B cell (primary cell): ENCODE measurements at regions of chr3 and their contacts with region 1.

Region 1: GRCh38 chr3:184174646-184175492 is at the start of gene AP2M1:
- DNase-seq: peak; percentile 98
- ATAC-seq: peak; percentile 98
- H3K4me3 ChIP-seq: peak within 1 kb of the TSS; percentile 57 to 100 (median 98)
- H3K4me3 Mint-ChIP-seq: peak within 1 kb of the TSS; percentile 93
- H3K27ac ChIP-seq: peak within 1 kb of the TSS; percentile 56 to 80
- H3K27ac Mint-ChIP-seq: peak within 1 kb of the TSS; percentile 96
- H3K4me1 ChIP-seq: peaks cover 23 to 34% of the 10 kb centered on the region in 2 donors
- H3K4me1 Mint-ChIP-seq: peaks cover 37% of the 10 kb centered on the region
- H3K27me3 ChIP-seq: no peaks in the 10 kb centered on the region
- H3K27me3 Mint-ChIP-seq: no peaks in the 10 kb centered on the region
- CTCF ChIP-seq: no peak
- total RNA-seq, gene AP2M1: 191 and 207 TPM in 2 replicates

Region 2: GRCh38 chr3:184154885-184155643 is 19.8 kb before region 1 on chr3 and contains the start of gene DVL3:
- CTCF ChIA-PET with region 1: interaction called, 4 read pairs
- POLR2A ChIA-PET with region 1: interaction called, 4 read pairs
- intact Hi-C with region 1: loop called (anchors 1 kb)
- DNase-seq: peak; percentile 77
- ATAC-seq: peak; percentile 83
- H3K4me3 ChIP-seq: peak within 1 kb of the TSS; percentile 70 to 81 (median 76)
- H3K4me3 Mint-ChIP-seq: peak within 1 kb of the TSS; percentile 95
- H3K27ac ChIP-seq: peak within 1 kb of the TSS; percentile 33 to 74
- H3K27ac Mint-ChIP-seq: peak within 1 kb of the TSS; percentile 87
- H3K4me1 ChIP-seq: peaks cover 13 to 34% of the 10 kb centered on the region in 2 donors
- H3K4me1 Mint-ChIP-seq: peaks cover 31% of the 10 kb centered on the region
- H3K27me3 ChIP-seq: no peaks in the 10 kb centered on the region
- H3K27me3 Mint-ChIP-seq: no peaks in the 10 kb centered on the region
- CTCF ChIP-seq: no peak
- total RNA-seq, gene DVL3: 81.3 and 92.0 TPM in 2 replicates

Region 3: GRCh38 chr3:184185461-184186308 is 10.8 kb after region 1 on chr3 and contains the start of gene ABCF3:
- CTCF ChIA-PET with region 1: interaction called, 9 read pairs
- POLR2A ChIA-PET with region 1: interaction called, 7 read pairs
- intact Hi-C with region 1: loop called (anchors 1 kb)
- DNase-seq: peak; percentile 100
- ATAC-seq: peak; percentile 94
- H3K4me3 ChIP-seq: peak within 1 kb of the TSS; percentile 70 to 100 (median 97)
- H3K4me3 Mint-ChIP-seq: peak within 1 kb of the TSS; percentile 99
- H3K27ac ChIP-seq: peak within 1 kb of the TSS; percentile 48 to 68
- H3K27ac Mint-ChIP-seq: peak within 1 kb of the TSS; percentile 94
- H3K4me1 ChIP-seq: peaks cover 17 to 21% of the 10 kb centered on the region in 2 donors
- H3K4me1 Mint-ChIP-seq: peaks cover 33% of the 10 kb centered on the region
- H3K27me3 ChIP-seq: no peaks in the 10 kb centered on the region
- H3K27me3 Mint-ChIP-seq: no peaks in the 10 kb centered on the region
- CTCF ChIP-seq: no peak
- total RNA-seq, gene ABCF3: 115 and 131 TPM in 2 replicates

Region 4: GRCh38 chr3:184314363-184314699 is 139.5 kb after region 1 on chr3 and contains the start of gene EIF4G1:
- CTCF ChIA-PET with region 1: no interaction called
- POLR2A ChIA-PET with region 1: no interaction called
- intact Hi-C with region 1: loop called (anchors 1 kb)
- DNase-seq: peak; percentile 96
- ATAC-seq: peak; percentile 90
- H3K4me3 ChIP-seq: peak within 1 kb of the TSS; percentile 43 to 71 (median 61)
- H3K4me3 Mint-ChIP-seq: peak within 1 kb of the TSS; percentile 90
- H3K27ac ChIP-seq: peak within 1 kb of the TSS; percentile 73 to 89
- H3K27ac Mint-ChIP-seq: peak within 1 kb of the TSS; percentile 88
- H3K4me1 ChIP-seq: peaks cover 13 to 23% of the 10 kb centered on the region in 2 donors
- H3K4me1 Mint-ChIP-seq: peaks cover 31% of the 10 kb centered on the region
- H3K27me3 ChIP-seq: no peaks in the 10 kb centered on the region
- H3K27me3 Mint-ChIP-seq: no peaks in the 10 kb centered on the region
- CTCF ChIP-seq: no peak
- total RNA-seq, gene EIF4G1: 160 TPM in 2 replicates